ENCODE measurements at regions of chr4 and their contacts with region 1.

Region 1: DNA sequence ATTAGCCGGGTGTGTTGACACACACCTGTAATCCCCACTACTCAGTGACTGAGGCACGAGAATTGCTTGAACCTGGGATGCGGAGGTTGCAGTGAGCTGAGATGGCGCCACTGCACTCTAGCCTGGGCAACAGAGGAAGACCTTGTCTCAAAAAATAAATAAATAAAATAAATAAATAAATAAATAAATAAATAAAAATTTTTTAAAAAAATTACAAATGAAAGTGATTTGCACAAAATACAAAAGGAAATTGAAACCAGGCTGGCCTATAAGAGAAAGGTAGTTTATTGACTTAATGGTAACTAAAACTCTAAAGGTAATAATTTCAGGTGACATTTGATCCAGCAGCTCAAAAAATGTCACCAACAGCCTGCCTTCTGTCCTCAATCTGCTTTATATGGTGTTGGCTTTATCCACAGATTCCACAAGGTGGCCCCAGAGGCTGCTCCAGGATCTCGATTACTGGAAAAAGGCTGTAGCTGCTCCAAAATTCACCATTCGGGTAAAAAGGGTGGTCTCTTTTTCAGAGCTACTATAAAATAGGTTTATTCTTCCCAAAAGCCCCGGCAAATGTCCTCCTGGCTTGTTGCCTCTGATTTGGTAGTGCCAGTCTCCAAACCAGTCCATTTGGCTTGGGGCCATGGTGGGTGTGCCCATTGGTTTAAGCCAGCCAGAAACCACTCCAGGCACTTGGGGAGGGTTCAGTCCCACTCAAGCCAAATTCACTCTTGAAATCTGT is 61.4 kb upstream of the TRIM2 start:
- DNase-seq: peak; percentile 50 to 95 (median 76)

Region 2: DNA sequence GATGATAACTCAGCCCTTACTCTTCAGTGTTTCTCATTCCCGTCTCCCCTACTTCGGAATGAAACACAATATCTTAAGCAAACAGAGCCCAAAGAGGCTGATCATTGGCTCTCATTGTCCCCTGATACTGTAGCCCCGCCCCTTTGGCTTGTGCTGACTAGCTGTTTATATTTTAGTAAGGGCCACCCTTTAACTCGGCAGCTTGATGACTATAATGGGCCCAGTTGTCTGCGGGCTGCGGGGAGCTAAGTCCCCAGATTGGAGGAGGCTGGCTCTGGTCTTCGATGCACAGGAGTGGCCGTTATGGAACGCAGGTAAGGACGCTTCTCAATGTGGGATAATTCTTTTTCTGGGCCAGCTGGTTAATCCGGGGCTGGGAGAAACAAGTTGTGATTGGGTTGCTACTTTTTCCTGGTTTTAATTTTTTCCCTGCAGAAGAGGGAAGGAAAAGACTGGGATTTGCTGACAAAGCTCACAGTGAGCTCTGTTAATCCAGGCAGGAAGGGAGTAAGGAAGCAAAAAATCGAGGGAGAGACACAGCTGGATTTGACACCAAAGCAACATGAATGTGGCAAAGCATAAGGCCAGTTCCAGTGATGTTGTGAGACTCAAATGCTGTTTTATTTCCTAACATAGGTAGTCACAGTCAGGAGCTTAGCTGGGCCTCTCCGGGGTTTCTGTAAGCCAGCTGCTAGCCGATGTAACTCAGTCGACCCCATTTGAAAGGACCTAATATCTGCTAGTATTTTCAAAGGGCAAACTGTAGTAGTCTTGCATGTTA is 61.6 kb after region 1 on chr4 and contains the start of gene TRIM2:
- intact Hi-C with region 1: loop called (anchors 5 kb)
- DNase-seq: peak in 9 of 10 donors; percentile 49 to 95 (median 77)

Region 3: DNA sequence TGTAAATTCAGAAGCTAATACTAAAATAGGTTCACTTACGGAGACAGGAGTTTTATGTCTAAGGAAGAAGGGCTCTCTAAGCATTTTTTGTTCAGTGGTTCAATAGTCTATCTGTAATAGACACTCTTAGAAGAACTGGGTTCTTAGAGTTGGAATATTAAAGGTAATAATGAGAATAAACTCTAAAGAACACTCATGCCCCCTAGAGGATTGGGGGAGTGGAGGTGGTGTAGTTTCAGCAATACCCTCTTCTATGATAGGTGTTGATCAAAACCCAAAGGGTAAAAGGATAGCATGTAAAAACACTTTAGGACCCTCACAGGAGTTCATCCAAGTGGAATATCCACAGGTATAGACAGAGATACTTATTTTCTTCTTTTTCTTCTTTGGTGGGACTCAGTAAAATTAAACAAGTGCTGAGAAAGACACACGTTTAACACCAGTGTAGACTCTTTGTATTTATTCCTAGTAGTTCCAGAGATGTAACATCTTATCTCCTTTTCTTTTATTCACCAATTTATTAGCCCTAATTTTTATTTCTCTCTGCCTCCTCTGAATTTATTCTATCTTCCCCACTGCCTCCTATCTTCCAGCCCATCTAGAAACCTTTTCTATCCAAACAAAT is 175.9 kb after region 1 on chr4:
- intact Hi-C with region 1: loop called (anchors 1 kb)
- DNase-seq: no peak

Region 4: DNA sequence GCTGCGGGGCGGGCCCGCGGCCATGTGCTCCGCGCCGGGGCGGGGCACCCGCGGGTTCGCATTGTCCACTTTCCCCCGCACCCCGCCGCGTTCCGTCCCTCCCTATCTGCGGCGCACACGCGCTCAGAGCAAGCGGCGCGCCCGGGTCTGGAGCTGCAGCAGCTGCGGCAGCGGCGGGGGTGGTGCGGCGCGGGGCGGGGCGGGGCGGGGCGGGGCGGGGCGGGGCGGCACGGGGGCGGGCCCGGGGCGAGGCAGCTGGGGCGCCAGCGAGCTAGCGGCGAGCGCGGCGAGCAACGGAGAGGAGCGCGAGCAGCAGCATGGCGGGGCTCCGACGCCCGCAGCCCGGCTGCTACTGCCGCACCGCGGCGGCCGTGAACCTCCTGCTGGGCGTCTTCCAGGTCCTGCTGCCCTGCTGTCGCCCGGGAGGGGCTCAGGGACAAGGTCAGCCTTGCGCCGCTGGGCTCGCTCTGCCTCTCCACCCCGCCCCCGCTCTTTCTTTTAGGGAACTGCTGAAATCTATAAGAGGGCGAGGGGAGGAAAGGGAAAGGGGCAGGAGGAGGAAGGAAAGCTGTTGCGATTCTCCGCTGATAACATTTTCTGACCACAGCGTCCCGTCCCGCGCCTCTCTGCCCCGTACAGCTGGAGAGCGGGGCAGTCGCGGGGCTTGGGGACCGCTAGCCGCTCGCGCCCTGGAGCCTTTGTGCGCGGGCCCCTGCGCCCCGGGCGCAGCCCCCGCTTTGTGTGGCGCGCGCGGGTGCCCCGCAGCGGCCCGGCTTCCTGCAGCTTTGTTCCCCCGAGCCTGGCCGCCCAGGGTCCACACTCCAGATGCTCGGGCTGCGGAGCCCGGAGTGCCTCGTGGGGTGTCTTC is 323.4 kb after region 1 on chr4 and contains the start of gene TMEM131L:
- intact Hi-C with region 1: loop called (anchors 10 kb)
- DNase-seq: peak; percentile 48 to 96 (median 60)